ENCODE measurements at regions of chr20 and their contacts with region 1.

Region 1: DNA sequence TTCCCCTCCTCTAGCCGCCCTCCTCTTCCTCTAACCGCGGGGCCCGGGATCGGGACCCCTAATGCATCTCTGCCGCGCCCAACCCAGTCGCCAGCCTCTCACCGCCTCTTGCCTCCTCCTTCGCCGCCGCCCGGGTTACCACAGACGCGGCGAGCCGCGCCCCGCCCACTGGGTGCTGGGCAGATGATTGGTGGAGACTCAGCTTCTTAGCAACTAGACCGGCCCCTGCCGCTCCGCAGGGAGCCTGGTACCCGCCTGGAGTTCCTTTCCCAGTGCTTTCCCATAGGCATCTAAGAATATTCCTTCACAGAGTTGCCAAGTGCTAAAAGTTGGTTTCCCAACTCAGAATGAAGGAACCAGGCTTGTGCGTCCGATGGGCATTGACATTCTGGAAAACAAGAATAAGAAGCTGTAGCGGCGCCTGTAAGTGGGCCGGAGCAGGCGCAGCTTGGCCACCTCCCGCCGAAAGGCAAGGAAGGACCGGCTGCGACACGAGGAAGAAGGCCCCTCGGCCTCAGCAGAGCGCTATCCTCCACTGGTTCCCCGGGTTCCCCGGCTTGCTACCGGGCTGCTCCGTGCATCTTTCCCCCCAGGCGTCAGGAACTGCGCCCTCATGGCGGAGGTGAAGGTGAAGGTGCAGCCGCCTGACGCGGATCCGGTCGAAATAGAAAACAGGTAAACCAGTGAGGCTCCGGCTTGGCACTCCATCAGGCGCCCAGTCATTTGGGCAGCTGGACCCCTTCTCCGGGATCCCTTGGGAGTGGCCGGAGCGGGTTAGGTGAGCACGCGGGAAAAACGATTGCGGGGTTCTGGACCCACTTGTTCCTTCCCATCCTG is at the starts of genes DZANK1 and POLR3F:
- DNase-seq: peak; percentile 94
- ATAC-seq: peak; percentile 95
- H3K4me3 ChIP-seq: peak within 1 kb of the TSS; percentile 54 to 97 (median 85)
- H3K4me3 Mint-ChIP-seq: peak within 1 kb of the TSS; percentile 97
- H3K27ac ChIP-seq: peak within 1 kb of the TSS; percentile 39 to 81
- H3K27ac Mint-ChIP-seq: peak within 1 kb of the TSS; percentile 97
- H3K4me1 ChIP-seq: peaks cover 12 to 15% of the 10 kb centered on the region in 2 donors
- H3K4me1 Mint-ChIP-seq: peaks cover 25% of the 10 kb centered on the region
- H3K27me3 ChIP-seq: no peaks in the 10 kb centered on the region
- H3K27me3 Mint-ChIP-seq: no peaks in the 10 kb centered on the region
- CTCF ChIP-seq: no peak
- total RNA-seq, gene DZANK1: 5.6 TPM in 2 replicates
- total RNA-seq, gene POLR3F: 13.1 and 13.7 TPM in 2 replicates

Region 2: DNA sequence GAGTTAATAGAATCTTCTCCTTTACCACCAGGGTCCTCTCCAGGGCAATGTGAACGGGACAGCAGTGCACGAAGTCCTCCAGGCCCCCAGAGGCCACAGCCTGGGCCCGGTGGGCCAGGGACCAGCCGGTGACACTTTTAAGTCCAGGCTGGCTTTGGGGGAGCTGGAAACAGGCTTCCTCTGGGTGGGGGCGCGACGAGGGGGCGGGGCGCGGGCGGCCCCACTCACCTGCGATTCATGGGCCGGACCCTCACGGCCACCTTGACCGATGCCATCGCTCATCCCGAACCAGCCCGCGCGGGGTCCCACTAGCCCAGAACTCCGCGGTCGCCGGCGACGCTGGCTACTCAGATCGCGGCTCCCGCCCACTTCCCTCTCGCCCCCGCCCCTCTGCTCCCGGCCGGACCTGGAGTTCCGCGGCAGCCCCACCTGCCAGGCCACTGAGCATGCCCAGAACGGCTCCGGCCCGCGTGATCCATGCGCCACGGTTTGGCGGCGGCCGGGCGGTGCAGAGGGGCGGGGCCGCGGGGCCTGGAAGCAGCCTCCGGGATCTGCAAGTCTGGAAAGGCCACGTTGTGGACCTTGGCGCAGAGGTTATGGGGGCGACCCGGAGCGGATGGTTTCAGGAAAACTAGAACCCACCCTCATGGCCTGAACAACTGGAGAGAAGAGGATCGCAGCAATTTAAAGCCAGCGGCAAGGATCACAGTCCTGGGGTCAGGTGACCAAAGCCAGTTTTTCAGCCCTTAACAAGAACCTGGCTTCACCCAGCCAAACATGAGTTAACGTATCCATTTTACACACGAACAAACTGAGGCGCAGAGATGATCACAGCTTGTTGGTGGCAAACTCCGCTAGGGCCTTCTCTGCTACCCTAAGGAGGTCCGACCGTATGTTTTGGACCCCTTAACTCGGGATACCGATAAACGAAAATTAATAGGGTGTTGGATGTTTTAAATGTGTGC is 1893.8 kb before region 1 on chr20 and contains the start of gene KIF16B:
- CTCF ChIA-PET with region 1: no interaction called
- POLR2A ChIA-PET with region 1: no interaction called
- intact Hi-C with region 1: loop called (anchors 5 kb)
- DNase-seq: peak; percentile 89
- ATAC-seq: peak; percentile 89
- H3K4me3 ChIP-seq: peak within 1 kb of the TSS; percentile 72 to 86 (median 83)
- H3K4me3 Mint-ChIP-seq: peak within 1 kb of the TSS; percentile 92
- H3K27ac ChIP-seq: peak within 1 kb of the TSS; percentile 38 to 60
- H3K27ac Mint-ChIP-seq: peak within 1 kb of the TSS; percentile 84
- H3K4me1 ChIP-seq: peaks cover 22 to 28% of the 10 kb centered on the region in 2 donors
- H3K4me1 Mint-ChIP-seq: peaks cover 42% of the 10 kb centered on the region
- H3K27me3 ChIP-seq: no peaks in the 10 kb centered on the region
- H3K27me3 Mint-ChIP-seq: no peaks in the 10 kb centered on the region
- CTCF ChIP-seq: no peak
- total RNA-seq, gene KIF16B: 12.4 and 13.0 TPM in 2 replicates

Region 3: GRCh38 chr20:18496740-18497592 is 29.9 kb after region 1 on chr20 and contains the start of gene RBBP9:
- CTCF ChIA-PET with region 1: interaction called, 3 read pairs
- POLR2A ChIA-PET with region 1: interaction called, 6 read pairs
- intact Hi-C with region 1: loop called (anchors 1 kb)
- DNase-seq: peak; percentile 81
- ATAC-seq: peak; percentile 100
- H3K4me3 ChIP-seq: peak within 1 kb of the TSS; percentile 74 to 96 (median 87)
- H3K4me3 Mint-ChIP-seq: peak within 1 kb of the TSS; percentile 98
- H3K27ac ChIP-seq: peak within 1 kb of the TSS; percentile 38 to 78
- H3K27ac Mint-ChIP-seq: peak within 1 kb of the TSS; percentile 89
- H3K4me1 ChIP-seq: peaks cover 7 to 11% of the 10 kb centered on the region in 2 donors
- H3K4me1 Mint-ChIP-seq: peaks cover 18% of the 10 kb centered on the region
- H3K27me3 ChIP-seq: no peaks in the 10 kb centered on the region
- H3K27me3 Mint-ChIP-seq: peaks cover 3% of the 10 kb centered on the region
- CTCF ChIP-seq: no peak
- total RNA-seq, gene RBBP9: 9.3 and 10.2 TPM in 2 replicates

Region 4: GRCh38 chr20:18587665-18588573 is 120.8 kb after region 1 on chr20 and contains the start of gene DTD1:
- CTCF ChIA-PET with region 1: no interaction called
- POLR2A ChIA-PET with region 1: no interaction called
- intact Hi-C with region 1: loop called (anchors 1 kb)
- DNase-seq: peak; percentile 89
- ATAC-seq: peak; percentile 96
- H3K4me3 ChIP-seq: peak within 1 kb of the TSS; percentile 47 to 77 (median 73)
- H3K4me3 Mint-ChIP-seq: peak within 1 kb of the TSS; percentile 94
- H3K27ac ChIP-seq: peak within 1 kb of the TSS; percentile 44 to 58
- H3K27ac Mint-ChIP-seq: peak within 1 kb of the TSS; percentile 86
- H3K4me1 ChIP-seq: peaks cover 17% of the 10 kb centered on the region in 2 donors
- H3K4me1 Mint-ChIP-seq: peaks cover 23% of the 10 kb centered on the region
- H3K27me3 ChIP-seq: peaks cover 0 to 10% (median 2%) of the 10 kb centered on the region in 4 experiments
- H3K27me3 Mint-ChIP-seq: peaks cover 8% of the 10 kb centered on the region
- CTCF ChIP-seq: peak; percentile 68
- total RNA-seq, gene DTD1: 18.7 and 18.9 TPM in 2 replicates

Region 5: DNA sequence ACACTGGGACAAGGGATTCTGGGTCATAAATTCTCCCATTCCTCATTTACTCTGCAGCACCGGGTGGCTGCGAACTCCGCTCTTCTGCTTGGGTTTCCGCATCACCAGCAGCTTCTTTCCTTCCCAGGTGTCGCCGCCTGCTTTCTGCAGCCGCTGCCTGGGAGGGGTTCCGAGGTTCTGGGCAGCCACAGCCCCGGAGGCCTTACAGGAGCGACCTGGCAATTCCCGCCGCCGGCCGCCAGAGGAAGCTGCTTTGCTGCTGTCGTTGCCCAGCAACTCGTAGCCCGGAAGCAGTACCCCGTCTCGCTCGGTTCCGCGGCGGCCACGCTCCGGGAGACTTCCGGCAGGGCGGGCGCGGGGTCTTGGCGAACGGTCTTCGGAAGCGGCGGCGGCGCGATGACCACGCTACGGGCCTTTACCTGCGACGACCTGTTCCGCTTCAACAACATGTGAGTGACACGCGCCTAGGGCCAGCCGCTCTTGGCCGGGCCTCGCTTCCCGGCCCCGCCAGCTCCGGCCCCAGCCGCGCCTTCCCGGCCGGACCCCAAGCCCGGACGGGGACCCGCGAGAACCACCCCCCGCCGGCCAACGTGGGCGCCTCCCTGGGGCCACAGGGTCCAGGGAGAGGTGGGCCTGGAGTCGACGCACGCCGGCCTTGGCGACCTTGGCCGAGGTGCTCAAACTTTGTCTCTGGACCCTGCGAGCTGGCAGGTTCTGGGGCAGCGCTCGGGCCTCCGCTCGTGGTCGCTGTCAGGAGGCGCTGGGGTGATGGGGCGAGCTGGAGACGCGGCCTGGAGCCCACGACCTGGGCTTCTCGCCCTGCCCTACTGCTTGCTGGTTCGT is 1550.1 kb after region 1 on chr20 and contains the start of gene NAA20:
- CTCF ChIA-PET with region 1: no interaction called
- POLR2A ChIA-PET with region 1: no interaction called
- intact Hi-C with region 1: loop called (anchors 2 kb)
- DNase-seq: peak; percentile 91
- ATAC-seq: peak; percentile 98
- H3K4me3 ChIP-seq: peak within 1 kb of the TSS; percentile 41 to 91 (median 83)
- H3K4me3 Mint-ChIP-seq: peak within 1 kb of the TSS; percentile 94
- H3K27ac ChIP-seq: peak within 1 kb of the TSS; percentile 1 to 86
- H3K27ac Mint-ChIP-seq: peak within 1 kb of the TSS; percentile 94
- H3K4me1 ChIP-seq: peaks cover 12 to 27% of the 10 kb centered on the region in 2 donors
- H3K4me1 Mint-ChIP-seq: peaks cover 42% of the 10 kb centered on the region
- H3K27me3 ChIP-seq: no peaks in the 10 kb centered on the region
- H3K27me3 Mint-ChIP-seq: no peaks in the 10 kb centered on the region
- CTCF ChIP-seq: peak; percentile 73
- total RNA-seq, gene NAA20: 25.5 and 27.1 TPM in 2 replicates

Measured in B cell (primary cell).